ENCODE measurements at regions of chrX and their contacts with region 1.

Region 1: DNA sequence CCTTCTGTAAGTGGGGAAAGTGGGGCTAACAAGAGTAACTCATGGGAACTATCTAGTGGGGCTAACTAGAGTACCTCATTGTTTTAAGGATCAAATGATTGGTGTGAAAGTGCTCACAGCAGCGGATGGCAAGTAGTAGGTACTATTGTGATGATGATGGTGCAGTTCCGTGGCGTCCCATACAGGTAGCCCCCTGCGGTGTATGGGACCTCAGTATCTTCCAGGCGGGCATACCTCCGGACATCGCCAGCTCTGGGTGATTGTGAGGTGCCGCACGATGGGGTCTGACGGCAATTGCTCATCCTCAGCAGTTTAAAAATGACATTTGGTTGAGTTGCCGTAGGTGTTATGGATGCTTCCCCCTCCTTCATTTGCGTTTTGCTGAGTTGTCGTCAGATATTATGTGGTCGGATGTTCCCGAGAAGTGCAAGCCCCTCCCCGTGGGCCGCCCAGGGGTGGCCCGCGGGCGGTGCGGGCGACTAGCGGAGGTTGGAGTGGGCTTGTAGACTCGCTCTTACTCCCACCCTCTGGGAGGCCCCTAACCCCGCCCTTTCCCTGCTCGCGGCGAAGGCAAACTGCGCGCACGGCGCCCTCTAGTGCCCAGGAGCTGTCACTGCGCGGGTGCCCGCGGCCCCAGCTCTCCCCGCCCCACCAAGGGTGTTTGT is 18.3 kb upstream of the GPR101 start:
- DNase-seq: peak; percentile 71
- ATAC-seq: peak; percentile 90

Region 2: GRCh38 chrX:136909706-136910564 is 142.2 kb before region 1 on chrX:
- intact Hi-C with region 1: no loop called
- DNase-seq: peak; percentile 76
- ATAC-seq: peak; percentile 85

Region 3: GRCh38 chrX:136953867-136954787 is 98.0 kb before region 1 on chrX:
- intact Hi-C with region 1: loop called (anchors 10 kb)
- DNase-seq: peak; percentile 52
- ATAC-seq: no peak

Measured in Right ventricle myocardium superior (tissue), 1 donor.